Right cardiac atrium (tissue), 5 donors: ENCODE measurements at regions of chr18 and their contacts with region 1.

Region 1: DNA sequence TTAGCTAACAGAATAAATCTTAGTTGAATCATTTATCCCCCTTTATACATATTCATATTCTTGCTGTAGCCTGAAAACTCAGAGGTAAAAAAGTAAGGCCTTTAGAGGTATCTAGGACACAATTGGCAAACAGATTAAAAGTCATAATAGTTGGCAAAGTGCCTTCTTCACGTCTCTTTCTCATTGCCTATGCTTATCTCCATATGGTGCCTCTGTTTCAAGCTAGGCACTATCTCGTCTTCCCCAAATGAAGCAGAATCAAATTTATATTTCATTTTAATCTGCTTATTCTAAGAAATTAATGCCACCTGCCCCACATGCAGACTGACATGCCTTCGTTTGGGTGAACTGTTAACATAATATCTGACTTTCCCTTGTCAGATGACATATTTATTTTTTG is 245.4 kb downstream of the CDH2 start:
- DNase-seq: no peak
- ATAC-seq: no peak
- H3K4me3 ChIP-seq: no peak overlapping the region
- H3K27ac ChIP-seq: no peak overlapping the region
- H3K4me1 ChIP-seq: no peaks in the 10 kb centered on the region
- H3K27me3 ChIP-seq: no peaks in the 10 kb centered on the region

Region 2: GRCh38 chr18:27983780-27984179 is 52.2 kb after region 1 on chr18:
- intact Hi-C with region 1: loop called in 1 of 4 experiments (anchors 10 kb)
- DNase-seq: no peak
- ATAC-seq: no peak
- H3K4me3 ChIP-seq: no peak overlapping the region
- H3K27ac ChIP-seq: no peak overlapping the region
- H3K4me1 ChIP-seq: no peaks in the 10 kb centered on the region
- H3K27me3 ChIP-seq: no peaks in the 10 kb centered on the region